ENCODE measurements at regions of chrX and their contacts with region 1.

Region 1: GRCh38 chrX:15737960-15738902 is at the start of gene CA5B:
- DNase-seq: peak; percentile 97
- ATAC-seq: peak; percentile 89
- H3K4me3 Mint-ChIP-seq: peak within 1 kb of the TSS; percentile 85
- H3K27ac Mint-ChIP-seq: peak within 1 kb of the TSS; percentile 77
- H3K4me1 Mint-ChIP-seq: peaks cover 20% of the 10 kb centered on the region
- H3K27me3 Mint-ChIP-seq: no peaks in the 10 kb centered on the region
- total RNA-seq, gene CA5B: 18.5 to 23.4 TPM

Region 2: DNA sequence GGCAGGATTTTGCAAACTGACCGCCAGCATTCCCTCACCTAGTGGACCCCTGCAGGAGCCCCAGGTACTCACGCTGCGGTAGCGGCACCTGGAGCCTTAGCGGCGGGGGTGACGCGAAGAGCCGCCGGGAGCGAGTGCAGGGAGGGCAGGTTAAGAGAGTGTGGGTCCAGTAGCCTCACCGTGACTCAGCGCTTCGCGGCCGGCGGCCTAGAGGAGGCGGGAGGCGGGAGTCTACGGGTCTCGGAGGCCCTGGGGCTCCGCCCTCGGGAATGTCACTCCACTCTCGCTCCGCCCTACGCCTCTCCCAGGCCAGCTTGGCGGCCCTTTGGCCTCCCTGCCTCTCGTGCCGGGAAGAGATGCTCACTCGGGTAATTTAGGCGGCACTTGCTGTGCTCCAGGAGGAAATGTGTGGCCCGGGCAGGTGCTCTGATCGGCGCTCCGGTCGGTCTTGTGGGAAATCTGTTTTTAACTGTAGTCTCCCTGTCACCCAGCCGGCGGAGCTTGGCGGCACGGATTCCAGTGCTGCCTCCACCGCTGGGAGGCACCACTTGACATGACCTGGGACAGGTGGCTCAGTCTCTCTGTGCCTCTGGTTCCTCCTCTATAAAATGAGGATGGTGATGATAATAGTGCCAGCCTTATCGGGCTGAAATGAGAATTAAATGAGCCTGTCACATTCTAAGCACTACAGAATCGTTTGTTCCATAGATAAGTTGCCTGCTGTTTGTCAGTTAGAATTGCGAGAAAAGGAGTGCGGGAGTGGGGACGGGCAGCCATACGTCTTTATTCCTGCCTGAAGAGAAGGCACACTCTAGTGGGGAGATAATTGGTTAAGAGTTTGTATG is 244.9 kb before region 1 on chrX and contains the start of gene PIR:
- POLR2A ChIA-PET with region 1: no interaction called
- DNase-seq: peak; percentile 56
- ATAC-seq: peak; percentile 91
- H3K4me3 Mint-ChIP-seq: peak within 1 kb of the TSS; percentile 81
- H3K27ac Mint-ChIP-seq: peak within 1 kb of the TSS; percentile 7
- H3K4me1 Mint-ChIP-seq: peaks cover 8% of the 10 kb centered on the region
- H3K27me3 Mint-ChIP-seq: peaks cover 8% of the 10 kb centered on the region
- total RNA-seq, gene PIR: 1.4 to 2.4 TPM

Region 3: DNA sequence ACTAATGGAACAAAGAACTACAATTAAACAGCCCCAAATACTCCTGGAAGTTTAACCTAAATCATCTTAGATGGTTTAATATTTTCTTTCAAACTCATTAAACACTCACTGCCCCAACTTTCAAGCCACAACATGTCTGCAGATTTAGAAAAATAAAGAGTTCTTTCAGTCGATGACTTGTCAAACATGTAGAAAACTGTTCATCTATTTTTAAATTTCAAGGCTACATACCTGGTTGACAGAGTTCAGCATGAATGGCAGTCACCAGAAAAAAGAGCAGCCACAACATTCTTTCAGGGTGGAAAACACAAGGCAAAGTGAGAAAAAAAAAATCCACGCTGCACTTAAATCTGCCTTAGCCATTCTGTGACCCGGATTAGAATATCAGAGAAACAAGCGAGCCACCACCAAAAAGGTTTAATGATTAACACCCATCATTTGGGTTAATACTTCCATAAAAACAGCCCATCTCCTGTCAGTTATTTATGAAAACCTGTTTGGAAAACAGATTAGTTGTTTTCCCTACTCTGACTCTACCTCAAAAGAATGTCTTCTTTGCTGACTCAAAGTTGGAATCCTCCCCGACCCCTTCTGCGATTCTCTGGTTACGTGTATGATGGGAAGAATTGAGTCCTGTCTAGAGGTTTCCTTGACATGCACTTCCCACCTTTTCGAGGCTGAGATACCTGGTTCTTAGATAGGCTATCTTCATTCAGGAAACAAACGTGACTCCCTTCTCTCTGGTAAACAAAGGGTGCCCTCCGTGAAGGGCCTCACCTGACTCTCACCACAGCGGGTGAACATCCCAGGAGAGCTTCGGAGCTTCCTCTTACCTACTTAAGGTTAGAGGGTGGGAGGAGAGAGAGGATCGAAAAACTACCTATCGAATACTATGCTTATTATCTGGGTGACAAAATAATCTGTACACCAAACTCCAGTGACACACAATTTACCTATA is 73.5 kb before region 1 on chrX and contains the start of gene CLTRN:
- POLR2A ChIA-PET with region 1: no interaction called
- DNase-seq: no peak
- ATAC-seq: no peak
- H3K4me3 Mint-ChIP-seq: no peak within 1 kb of the TSS
- H3K27ac Mint-ChIP-seq: no peak within 1 kb of the TSS
- H3K4me1 Mint-ChIP-seq: no peaks in the 10 kb centered on the region
- H3K27me3 Mint-ChIP-seq: peaks cover 7% of the 10 kb centered on the region
- total RNA-seq, gene CLTRN: 0.43 TPM in 1 of 2 experiments, not detected in the other

Region 4: GRCh38 chrX:15749642-15750610 is 11.7 kb after region 1 on chrX:
- POLR2A ChIA-PET with region 1: interaction called, 48 read pairs
- DNase-seq: no peak
- ATAC-seq: peak; percentile 68
- H3K4me3 Mint-ChIP-seq: peak overlapping the region; percentile 73
- H3K27ac Mint-ChIP-seq: peak overlapping the region; percentile 93
- H3K4me1 Mint-ChIP-seq: peaks cover 30% of the 10 kb centered on the region
- H3K27me3 Mint-ChIP-seq: no peaks in the 10 kb centered on the region

Region 5: DNA sequence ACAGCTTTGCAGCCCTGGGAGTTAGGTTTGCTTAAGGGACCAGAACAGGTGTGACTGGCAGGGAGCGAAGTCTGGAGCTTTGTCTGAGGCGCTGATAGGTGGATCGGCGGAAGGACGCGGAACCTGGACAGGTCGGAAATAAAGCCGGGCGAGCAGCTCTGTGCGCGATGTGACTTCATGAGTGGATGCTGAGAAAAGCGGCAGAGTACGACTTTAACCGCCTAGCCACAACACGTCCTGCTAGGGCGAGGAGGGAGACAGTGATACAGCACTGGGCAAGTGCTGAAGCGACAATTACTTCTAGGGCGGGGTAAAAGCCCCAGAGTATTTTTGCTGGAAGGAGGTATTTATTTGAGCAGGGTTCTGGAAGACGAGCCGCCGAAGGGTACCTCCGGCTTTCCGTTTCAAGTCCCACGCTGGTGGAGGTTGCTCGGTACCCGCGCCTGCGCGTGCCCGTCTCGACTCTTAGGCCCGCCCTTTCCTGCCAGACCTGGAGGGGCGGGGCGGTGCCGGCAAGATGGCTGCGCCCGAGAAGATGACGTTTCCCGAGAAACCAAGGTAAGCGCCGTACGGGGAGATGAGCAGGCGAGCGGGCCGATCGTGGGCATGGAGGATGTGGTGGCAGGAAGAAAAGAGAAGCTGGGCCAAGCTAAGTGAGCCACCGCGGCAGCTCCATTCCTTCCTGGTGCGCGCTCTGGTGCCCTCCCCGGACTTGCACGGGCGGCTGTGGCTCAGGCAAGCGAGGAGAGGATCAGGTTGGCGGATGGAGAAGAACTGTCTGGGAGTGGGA is 51.9 kb after region 1 on chrX and contains the start of gene ZRSR2:
- POLR2A ChIA-PET with region 1: interaction called, 17 read pairs
- DNase-seq: peak; percentile 84
- ATAC-seq: peak; percentile 91
- H3K4me3 Mint-ChIP-seq: no peak within 1 kb of the TSS
- H3K27ac Mint-ChIP-seq: no peak within 1 kb of the TSS
- H3K4me1 Mint-ChIP-seq: peaks cover 13% of the 10 kb centered on the region
- H3K27me3 Mint-ChIP-seq: no peaks in the 10 kb centered on the region
- total RNA-seq, gene ZRSR2: 19.3 TPM

Region 6: DNA sequence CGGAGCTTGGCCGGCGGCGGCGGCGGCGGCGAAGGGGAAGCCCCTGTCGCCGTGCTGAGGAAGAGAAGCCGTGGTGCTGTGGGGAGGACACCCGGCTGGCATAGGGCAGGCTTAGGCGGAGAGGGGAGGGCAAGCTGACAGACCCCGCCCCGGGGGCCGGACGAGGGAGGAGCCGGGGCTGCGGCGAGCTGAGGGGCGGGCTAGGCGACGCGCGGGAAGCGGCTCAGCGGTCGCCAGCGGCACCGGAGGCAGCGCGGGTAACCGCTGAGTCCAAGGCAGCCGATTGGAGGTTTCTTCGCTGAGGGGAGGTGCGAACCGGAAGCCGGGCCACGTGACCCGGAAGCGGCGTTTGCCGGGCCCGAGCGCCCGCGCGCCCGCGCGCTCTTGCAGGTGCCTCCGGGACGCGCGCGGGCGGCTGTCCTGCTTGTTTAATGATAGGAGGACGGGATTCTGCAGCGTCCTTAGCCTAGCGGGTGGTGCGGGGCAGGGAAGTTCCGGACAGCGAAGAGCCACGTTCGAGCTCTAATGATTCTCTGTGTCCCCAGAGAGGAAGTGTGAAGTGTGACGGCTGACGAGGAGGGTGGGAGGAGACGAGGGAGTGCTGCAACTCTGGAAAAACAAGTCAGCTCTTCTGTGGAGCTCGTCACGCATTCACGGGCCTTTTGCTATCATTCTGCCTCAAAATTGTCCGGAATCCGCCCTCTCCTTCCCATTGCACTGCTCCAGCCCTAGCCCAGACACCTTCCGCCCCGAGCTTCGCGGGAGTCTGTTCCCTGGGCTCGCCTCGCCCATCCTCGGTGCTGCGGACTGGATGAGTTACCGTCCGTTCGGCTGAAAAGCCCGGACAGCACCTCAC is 116.7 kb after region 1 on chrX and contains the start of gene AP1S2:
- POLR2A ChIA-PET with region 1: interaction called, 12 read pairs
- DNase-seq: peak; percentile 94
- ATAC-seq: peak; percentile 95
- H3K4me3 Mint-ChIP-seq: peak within 1 kb of the TSS; percentile 87
- H3K27ac Mint-ChIP-seq: peak within 1 kb of the TSS; percentile 93
- H3K4me1 Mint-ChIP-seq: peaks cover 17% of the 10 kb centered on the region
- H3K27me3 Mint-ChIP-seq: peaks cover 2% of the 10 kb centered on the region
- total RNA-seq, gene AP1S2: 28.8 to 31.5 TPM

Measured in activated naive CD8-positive, alpha-beta T cell treated with anti-CD3 and anti-CD28 coated beads, Interleukin-2, amount 10 ng/mL, durations not matched to agents 7 days and 5 days (primary cell).